ENCODE measurements at regions of chr19 and their contacts with region 1.

Region 1: DNA sequence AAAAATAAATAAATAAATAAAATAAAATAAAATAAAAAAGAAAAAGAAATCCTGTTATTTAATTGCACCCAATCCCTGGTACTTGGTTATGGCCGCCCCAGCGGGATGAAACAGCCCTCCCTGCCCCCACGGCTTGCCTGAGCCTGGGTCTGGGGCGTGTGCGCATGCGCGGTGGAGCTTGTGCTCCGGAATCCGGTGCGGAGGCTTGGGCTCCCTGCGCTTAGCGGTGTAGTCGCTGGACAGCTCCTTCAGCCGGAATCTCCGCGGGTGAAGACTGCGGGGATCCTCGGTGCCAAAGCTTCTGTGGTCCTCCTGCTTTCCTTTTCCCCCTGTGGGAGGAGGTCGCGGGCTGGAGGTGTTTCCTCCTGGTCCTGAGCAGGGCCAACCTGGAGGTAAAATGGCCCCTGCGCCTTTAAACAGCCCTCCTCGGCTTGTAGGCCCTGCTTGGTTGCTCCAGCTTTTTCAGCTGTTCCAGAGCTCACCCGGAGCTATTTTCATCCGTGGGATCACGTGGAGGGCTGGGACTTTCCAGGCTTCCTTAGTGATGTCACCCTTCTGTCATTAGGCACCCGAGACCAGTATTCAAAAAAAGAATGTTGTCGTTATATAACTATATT is at the start of gene PLA2G4C:
- DNase-seq: peak; percentile 70 to 76
- H3K4me3 ChIP-seq: peak within 1 kb of the TSS; percentile 62
- H3K27ac ChIP-seq: peak within 1 kb of the TSS; percentile 18
- H3K4me1 ChIP-seq: peaks cover 7% of the 10 kb centered on the region; the same call in 1 of the 2 replicates
- H3K27me3 ChIP-seq: no peaks in the 10 kb centered on the region
- CTCF ChIP-seq: no peak
- total RNA-seq, gene PLA2G4C: 1.2 TPM in 1 of 2 replicates, not detected in the other

Region 2: DNA sequence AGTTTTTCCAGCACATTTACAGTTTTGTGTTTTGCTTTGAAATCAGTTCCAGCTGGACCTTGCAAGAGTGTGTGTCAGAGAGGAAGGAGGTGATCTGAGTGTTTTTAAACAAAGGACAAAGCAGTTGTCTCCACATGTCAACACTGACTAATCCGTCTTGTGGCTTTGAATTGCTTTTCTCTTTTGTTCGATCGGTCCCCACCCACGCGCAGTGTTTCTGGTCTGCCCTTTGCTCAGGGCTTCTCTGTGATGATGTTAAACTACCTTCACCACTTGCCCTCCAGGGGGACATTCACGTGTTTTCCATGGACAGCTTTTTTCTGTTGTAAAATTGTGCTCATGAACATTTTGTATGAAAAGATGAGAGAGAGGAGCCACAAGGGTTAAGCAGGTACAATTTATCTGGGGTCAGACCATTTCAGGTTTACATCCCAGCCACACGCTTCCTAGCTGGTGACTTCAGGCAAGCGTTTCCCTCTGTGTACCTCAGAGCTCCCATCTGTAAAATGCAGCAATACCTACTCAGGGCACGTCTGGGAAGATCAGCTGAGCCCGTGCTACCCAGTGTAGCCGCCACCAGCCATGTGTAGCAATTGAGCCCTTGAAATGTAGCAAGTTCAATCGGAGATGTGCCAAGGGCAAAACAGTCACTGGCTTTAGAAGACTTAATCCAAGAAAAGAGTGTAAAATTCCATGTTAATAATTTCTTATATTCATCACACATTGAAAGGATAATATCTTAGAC is 13.6 kb after region 1 on chr19:
- CTCF ChIA-PET with region 1: interaction called, 8 read pairs
- POLR2A ChIA-PET with region 1: interaction called, 33 read pairs
- intact Hi-C with region 1: no loop called
- DNase-seq: peak in 1 of 2 experiments; percentile 37
- H3K4me3 ChIP-seq: no peak overlapping the region
- H3K27ac ChIP-seq: no peak overlapping the region
- H3K4me1 ChIP-seq: no peaks in the 10 kb centered on the region
- H3K27me3 ChIP-seq: no peaks in the 10 kb centered on the region
- CTCF ChIP-seq: no peak

Region 3: DNA sequence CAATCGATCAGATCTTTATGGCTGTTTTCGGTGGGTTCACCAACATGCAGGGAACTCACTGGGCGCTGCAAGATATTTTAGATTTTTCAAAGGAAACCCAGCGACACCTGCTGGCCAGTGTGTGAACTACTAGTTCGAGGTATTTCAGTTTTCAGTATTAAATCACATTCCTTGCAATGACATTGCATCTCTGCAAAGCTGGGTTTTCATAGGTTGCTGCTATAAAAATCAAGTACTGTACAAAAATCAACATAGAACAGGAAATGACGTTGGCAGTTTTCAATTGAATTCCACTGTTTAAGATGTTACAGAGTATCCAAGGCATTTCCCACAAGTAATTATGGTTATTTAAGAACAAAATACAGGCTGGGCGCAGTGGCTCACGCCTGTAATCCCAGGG is 42.1 kb after region 1 on chr19:
- CTCF ChIA-PET with region 1: no interaction called
- POLR2A ChIA-PET with region 1: no interaction called
- intact Hi-C with region 1: loop called (anchors 1 kb)
- DNase-seq: peak; percentile 46 to 54
- H3K4me3 ChIP-seq: no peak overlapping the region
- H3K27ac ChIP-seq: peak overlapping the region; percentile 32; the same call in 1 of the 2 replicates
- H3K4me1 ChIP-seq: no peaks in the 10 kb centered on the region
- H3K27me3 ChIP-seq: no peaks in the 10 kb centered on the region
- CTCF ChIP-seq: peak; percentile 97

Region 4: GRCh38 chr19:48255376-48256303 is 145.2 kb after region 1 on chr19 and contains the start of gene CARD8:
- CTCF ChIA-PET with region 1: no interaction called
- POLR2A ChIA-PET with region 1: no interaction called
- intact Hi-C with region 1: loop called (anchors 1 kb)
- DNase-seq: peak; percentile 72 to 82
- H3K4me3 ChIP-seq: peak within 1 kb of the TSS; percentile 65
- H3K27ac ChIP-seq: peak within 1 kb of the TSS; percentile 93
- H3K4me1 ChIP-seq: peaks cover 32% of the 10 kb centered on the region
- H3K27me3 ChIP-seq: no peaks in the 10 kb centered on the region
- CTCF ChIP-seq: no peak
- total RNA-seq, gene CARD8: 17.7 and 25.6 TPM in 2 replicates

Region 5: DNA sequence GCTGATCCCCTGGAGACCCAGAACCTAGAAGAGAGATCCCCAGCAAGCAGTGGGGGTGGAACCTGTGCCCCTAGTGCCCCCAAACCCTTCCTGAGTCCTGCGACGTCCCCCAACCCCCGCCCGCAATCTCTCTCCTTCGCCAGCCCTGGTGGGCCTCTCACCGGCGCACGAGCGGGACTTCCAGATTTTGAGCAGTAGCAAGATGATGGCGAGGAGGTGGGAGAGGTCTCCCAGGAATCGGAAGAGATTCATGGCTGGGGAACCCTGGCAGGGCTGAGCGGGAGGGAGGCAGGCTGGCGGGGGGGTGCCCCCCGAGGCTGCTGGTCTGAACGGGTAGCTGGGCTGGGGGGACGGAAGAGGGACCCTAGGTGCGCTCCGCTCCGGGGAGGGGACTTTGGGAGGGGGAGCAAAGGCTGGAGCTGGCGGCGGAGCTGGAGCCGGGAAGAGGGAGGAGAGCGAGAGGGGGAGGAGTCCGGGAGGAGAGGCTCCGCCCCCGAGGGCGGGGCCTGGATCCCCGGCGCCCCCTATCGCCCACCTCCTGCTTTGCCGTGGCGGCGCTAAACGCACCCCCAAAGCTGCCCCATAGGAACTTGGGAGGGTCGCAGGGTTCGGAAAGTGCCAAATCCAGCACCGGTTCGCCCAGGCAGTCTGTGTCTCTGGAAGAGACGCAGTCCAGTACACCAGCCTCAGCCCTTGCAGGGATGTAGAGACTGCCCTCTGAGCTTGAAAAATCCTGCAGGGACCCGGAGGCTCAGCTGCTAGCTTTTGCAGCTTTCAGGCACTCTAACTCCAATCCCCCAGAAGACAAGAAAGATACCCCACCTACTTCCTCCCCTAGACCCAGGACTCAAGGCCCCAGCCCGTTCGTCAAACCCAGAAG is 280.9 kb after region 1 on chr19 and contains the start of gene KDELR1:
- CTCF ChIA-PET with region 1: interaction called, 10 read pairs
- POLR2A ChIA-PET with region 1: no interaction called
- intact Hi-C with region 1: no loop called
- DNase-seq: peak in 1 of 2 experiments; percentile 82
- H3K4me3 ChIP-seq: peak within 1 kb of the TSS; percentile 91
- H3K27ac ChIP-seq: peak within 1 kb of the TSS; percentile 58
- H3K4me1 ChIP-seq: no peaks in the 10 kb centered on the region
- H3K27me3 ChIP-seq: peaks cover 11% of the 10 kb centered on the region
- CTCF ChIP-seq: peak; percentile 95
- total RNA-seq, gene KDELR1: 220 and 261 TPM in 2 replicates

Region 6: GRCh38 chr19:48660854-48661731 is 550.6 kb after region 1 on chr19:
- CTCF ChIA-PET with region 1: no interaction called
- POLR2A ChIA-PET with region 1: interaction called, 18 read pairs
- intact Hi-C with region 1: no loop called
- DNase-seq: peak; percentile 73 to 81
- H3K4me3 ChIP-seq: no peak overlapping the region
- H3K27ac ChIP-seq: no peak overlapping the region
- H3K4me1 ChIP-seq: peaks cover 5% of the 10 kb centered on the region; the same call in 1 of the 2 replicates
- H3K27me3 ChIP-seq: no peaks in the 10 kb centered on the region
- CTCF ChIP-seq: no peak

Measured in PC-9 (cell line).